ENCODE measurements at regions of chr1 and their contacts with region 1.

Region 1: DNA sequence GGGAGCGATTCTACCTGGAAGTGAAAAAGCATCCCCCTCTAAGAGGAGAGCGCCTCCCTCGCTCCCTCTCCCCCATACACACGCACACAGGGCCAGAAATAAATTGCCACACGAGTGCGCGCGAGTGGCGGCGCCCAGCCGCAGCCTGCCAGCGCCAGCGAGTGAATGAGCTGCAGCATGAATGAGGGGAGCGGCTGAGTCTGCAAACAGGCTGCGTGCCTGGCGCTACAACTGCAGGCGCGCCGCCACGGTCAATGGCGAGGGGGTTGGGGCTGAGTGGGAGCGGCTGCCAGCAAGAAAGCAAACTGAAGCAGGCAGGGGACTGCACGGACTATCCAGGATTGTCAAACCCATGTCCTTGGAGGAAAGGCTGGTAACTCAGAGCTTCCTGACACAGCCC is 2.2 kb downstream of the CAMK1G start:
- DNase-seq: peak; percentile 45 to 75 (median 68)
- H3K4me3 ChIP-seq: no peak overlapping the region
- H3K27ac ChIP-seq: no peak overlapping the region
- H3K4me1 ChIP-seq: peaks cover 8% of the 10 kb centered on the region
- H3K27me3 ChIP-seq: no peaks in the 10 kb centered on the region
- CTCF ChIP-seq: no peak
- EP300 ChIP-seq: no peak
- POLR2A ChIP-seq: no peak

Region 2: GRCh38 chr1:209527993-209528392 is 57.7 kb before region 1 on chr1:
- intact Hi-C with region 1: no loop called
- DNase-seq: no peak
- H3K4me3 ChIP-seq: no peak overlapping the region
- H3K27ac ChIP-seq: no peak overlapping the region
- H3K4me1 ChIP-seq: no peaks in the 10 kb centered on the region
- H3K27me3 ChIP-seq: no peaks in the 10 kb centered on the region
- CTCF ChIP-seq: no peak
- EP300 ChIP-seq: no peak
- POLR2A ChIP-seq: no peak

Region 3: GRCh38 chr1:209601809-209602657 is 16.4 kb after region 1 on chr1:
- intact Hi-C with region 1: no loop called
- DNase-seq: peak in 4 of 5 donors; percentile 44 to 53 (median 50)
- H3K4me3 ChIP-seq: no peak overlapping the region
- H3K27ac ChIP-seq: no peak overlapping the region
- H3K4me1 ChIP-seq: no peaks in the 10 kb centered on the region
- H3K27me3 ChIP-seq: no peaks in the 10 kb centered on the region
- CTCF ChIP-seq: peak; percentile 55 to 68 (median 62)
- EP300 ChIP-seq: no peak
- POLR2A ChIP-seq: no peak

Region 4: DNA sequence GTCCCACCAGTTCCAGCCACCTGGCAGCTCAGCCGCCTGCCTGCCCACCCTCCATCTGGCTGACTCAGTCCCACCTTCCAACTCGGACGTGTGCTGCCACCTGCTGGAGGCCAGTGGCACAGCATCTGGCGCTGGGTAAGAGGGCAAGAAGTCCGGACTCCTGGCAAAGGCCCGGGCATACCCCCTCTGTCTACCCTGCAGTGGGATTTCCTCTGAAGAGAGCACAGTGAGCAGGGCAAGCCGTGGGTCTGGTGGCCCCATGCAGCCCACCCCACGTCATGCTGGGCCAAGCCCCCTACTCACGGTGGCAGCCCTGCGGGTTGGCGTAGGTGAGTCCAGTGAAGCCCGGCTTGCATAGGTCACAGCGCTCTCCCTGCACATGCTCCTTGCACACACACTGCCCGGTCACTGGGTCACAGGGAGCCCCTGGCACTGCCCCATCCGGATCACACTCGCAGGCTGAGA is 42.1 kb after region 1 on chr1:
- intact Hi-C with region 1: loop called in 2 of 4 experiments (anchors 5 kb)
- DNase-seq: peak; percentile 76 to 90 (median 86)
- H3K4me3 ChIP-seq: no peak overlapping the region
- H3K27ac ChIP-seq: no peak overlapping the region
- H3K4me1 ChIP-seq: peaks cover 8% of the 10 kb centered on the region
- H3K27me3 ChIP-seq: no peaks in the 10 kb centered on the region
- CTCF ChIP-seq: peak; percentile 82 to 92 (median 87)
- EP300 ChIP-seq: no peak
- POLR2A ChIP-seq: no peak

Region 5: DNA sequence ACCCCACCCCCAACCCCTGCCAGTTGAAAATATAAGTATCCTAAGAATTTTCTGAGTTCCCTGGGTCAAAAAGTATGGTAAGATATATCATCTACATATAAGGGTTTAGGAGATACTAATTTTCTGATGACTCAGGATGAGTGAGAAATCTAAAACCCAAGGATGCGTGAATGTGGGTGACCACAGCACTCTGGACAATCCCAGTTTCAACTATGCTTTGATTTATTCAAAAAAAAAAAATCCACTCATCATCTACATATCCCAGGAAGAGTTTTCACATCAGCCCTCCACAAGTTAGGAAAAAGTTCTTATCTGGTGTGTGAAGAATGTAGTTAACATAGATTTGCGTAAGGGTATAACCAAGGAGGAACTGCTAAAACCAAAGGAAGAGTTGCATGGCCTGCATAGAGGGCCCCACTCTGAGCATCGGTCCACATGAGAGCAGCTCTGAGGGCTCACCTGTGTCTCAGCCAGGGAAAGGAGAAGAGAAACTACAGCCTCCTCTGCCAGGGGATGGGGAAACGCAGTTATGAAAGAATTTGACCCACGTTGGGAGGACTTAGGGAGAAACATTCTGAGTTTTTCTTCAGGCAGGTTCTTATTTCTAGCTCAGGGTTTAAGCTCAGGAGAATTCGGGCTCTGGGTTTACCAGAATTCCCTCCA is 47.8 kb after region 1 on chr1:
- intact Hi-C with region 1: loop called in 2 of 4 experiments (anchors 5 kb)
- DNase-seq: no peak
- H3K4me3 ChIP-seq: no peak overlapping the region
- H3K27ac ChIP-seq: no peak overlapping the region
- H3K4me1 ChIP-seq: no peaks in the 10 kb centered on the region
- H3K27me3 ChIP-seq: no peaks in the 10 kb centered on the region
- CTCF ChIP-seq: no peak
- EP300 ChIP-seq: no peak
- POLR2A ChIP-seq: no peak

Region 6: DNA sequence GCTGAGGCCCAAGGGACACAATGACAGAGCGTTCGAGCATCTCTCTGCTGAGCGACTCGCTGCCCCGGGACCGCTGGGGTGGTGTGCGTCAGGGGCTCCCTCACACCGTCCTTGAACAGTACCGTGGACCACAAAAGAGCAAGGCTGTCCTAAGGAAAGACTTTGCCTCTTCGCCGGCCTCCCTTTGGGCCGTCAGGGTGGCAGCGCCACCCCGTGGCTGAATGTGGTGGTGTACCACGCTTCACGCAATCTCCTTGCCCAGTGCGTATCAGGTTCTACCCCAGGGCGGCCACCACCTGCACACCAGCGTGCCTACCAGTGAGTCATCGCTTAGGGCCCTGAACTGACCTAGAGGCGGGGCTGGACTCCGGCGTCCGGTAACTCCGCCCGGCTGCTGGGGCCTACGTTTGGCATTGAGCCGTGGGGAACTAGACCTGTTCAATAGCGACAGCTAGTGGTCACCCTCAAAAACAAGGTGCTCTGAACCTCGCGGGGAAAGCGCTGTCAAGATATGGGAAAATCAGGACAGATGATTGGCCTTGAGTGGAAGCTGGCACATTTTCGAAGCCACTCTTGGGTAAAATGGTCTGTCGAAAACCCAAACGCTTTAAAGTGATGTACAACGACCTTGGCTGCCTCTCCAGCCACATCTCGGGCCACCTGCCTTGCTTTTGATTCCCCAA is 162.0 kb after region 1 on chr1:
- intact Hi-C with region 1: loop called in 1 of 4 experiments (anchors 5 kb)
- DNase-seq: peak; percentile 93 to 96 (median 95)
- H3K4me3 ChIP-seq: no peak overlapping the region
- H3K27ac ChIP-seq: peak overlapping the region in 1 of 2 donors; percentile 31
- H3K4me1 ChIP-seq: peaks cover 8% of the 10 kb centered on the region
- H3K27me3 ChIP-seq: no peaks in the 10 kb centered on the region
- CTCF ChIP-seq: peak; percentile 81 to 100 (median 99)
- EP300 ChIP-seq: no peak
- POLR2A ChIP-seq: peak; percentile 3

Measured in ovary (tissue), 10 donors.